ENCODE measurements at regions of chr6 and their contacts with region 1.

Region 1: GRCh38 chr6:31135710-31136109 is 3.2 kb downstream of the PSORS1C2 start:
- H3K4me3 ChIP-seq: no peak overlapping the region
- H3K27ac ChIP-seq: no peak overlapping the region
- H3K4me1 ChIP-seq: no peaks in the 10 kb centered on the region
- CTCF ChIP-seq: no peak

Region 2: GRCh38 chr6:30793521-30794194 is 342.1 kb before region 1 on chr6:
- CTCF ChIA-PET with region 1: no interaction called
- POLR2A ChIA-PET with region 1: no interaction called
- H3K4me3 ChIP-seq: no peak overlapping the region
- H3K27ac ChIP-seq: no peak overlapping the region
- H3K4me1 ChIP-seq: no peaks in the 10 kb centered on the region
- CTCF ChIP-seq: no peak

Region 3: GRCh38 chr6:31122791-31123706 is 12.7 kb before region 1 on chr6:
- CTCF ChIA-PET with region 1: interaction called, 49 read pairs
- POLR2A ChIA-PET with region 1: no interaction called
- H3K4me3 ChIP-seq: no peak overlapping the region
- H3K27ac ChIP-seq: no peak overlapping the region
- H3K4me1 ChIP-seq: peaks cover 10% of the 10 kb centered on the region
- CTCF ChIP-seq: no peak

Measured in HEK293 (cell line).